Naive thymus-derived CD4-positive, alpha-beta T cell (primary cell): ENCODE measurements at regions of chr15 and their contacts with region 1.

Region 1: DNA sequence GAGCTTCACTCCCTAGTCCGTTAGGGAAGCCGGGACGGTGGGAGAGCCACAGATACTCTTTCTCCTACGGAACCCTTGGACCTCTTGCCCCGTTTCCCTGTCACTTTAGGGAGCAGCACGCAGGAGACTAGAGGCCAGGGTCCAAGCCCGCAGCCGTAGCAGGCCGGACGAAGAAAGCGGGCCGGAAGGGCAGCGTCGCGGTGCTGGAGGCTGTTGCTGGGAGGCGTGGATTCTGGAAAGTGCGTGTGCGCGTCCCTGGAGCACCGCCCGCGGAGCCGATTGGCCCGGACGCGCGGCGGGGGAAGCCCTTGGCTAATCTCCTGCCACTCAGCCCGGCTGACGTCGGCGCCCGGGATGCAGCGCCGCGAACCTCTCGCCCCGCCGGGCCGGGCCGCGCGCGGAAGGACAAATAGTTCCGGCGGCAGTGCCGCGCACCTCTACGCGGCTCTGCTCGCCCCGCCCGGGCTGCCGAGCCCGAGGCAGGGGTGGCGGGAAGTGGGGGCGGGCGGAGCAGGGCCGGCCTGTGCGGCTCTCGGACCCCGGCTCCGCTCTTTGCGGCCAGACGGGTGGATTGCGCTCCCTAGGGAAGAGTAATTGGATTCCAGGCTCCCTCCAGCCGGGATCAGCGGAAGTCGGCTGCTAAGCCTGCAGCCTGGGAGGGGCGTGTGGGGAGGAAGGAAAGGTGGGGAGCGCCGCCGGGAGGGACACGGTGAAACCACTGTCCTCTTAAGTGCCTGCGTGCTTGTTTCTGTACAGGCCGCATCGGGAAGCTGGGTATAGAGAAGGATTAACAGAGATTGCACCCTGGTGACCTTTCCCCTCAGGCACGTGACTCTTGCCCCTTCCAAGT is 31.3 kb upstream of the TCF12 start:
- DNase-seq: peak; percentile 74 to 86 (median 80)
- ATAC-seq: peak; percentile 91
- H3K4me3 ChIP-seq: peak overlapping the region; percentile 80
- H3K4me3 Mint-ChIP-seq: peak overlapping the region; percentile 82 to 96 (median 88)
- H3K27ac ChIP-seq: peak overlapping the region; percentile 86
- H3K27ac Mint-ChIP-seq: peak overlapping the region; percentile 80 to 98 (median 93)
- H3K4me1 ChIP-seq: peaks cover 9 to 12% of the 10 kb centered on the region in 2 donors
- H3K4me1 Mint-ChIP-seq: peaks cover 17 to 35% (median 26%) of the 10 kb centered on the region in 7 donors
- H3K27me3 ChIP-seq: no peaks in the 10 kb centered on the region
- H3K27me3 Mint-ChIP-seq: peaks cover 0 to 8% (median 0%) of the 10 kb centered on the region in 5 donors

Region 2: GRCh38 chr15:56390739-56391267 is 496.4 kb before region 1 on chr15:
- CTCF ChIA-PET with region 1: no interaction called
- POLR2A ChIA-PET with region 1: no interaction called
- intact Hi-C with region 1: no loop called
- DNase-seq: no peak
- ATAC-seq: no peak
- H3K4me3 ChIP-seq: no peak overlapping the region
- H3K4me3 Mint-ChIP-seq: no peak overlapping the region
- H3K27ac ChIP-seq: no peak overlapping the region
- H3K27ac Mint-ChIP-seq: no peak overlapping the region
- H3K4me1 ChIP-seq: no peaks in the 10 kb centered on the region
- H3K4me1 Mint-ChIP-seq: no peaks in the 10 kb centered on the region
- H3K27me3 ChIP-seq: no peaks in the 10 kb centered on the region
- H3K27me3 Mint-ChIP-seq: peaks cover 0 to 15% (median 0%) of the 10 kb centered on the region in 5 donors

Region 3: GRCh38 chr15:56984681-56985481 is 97.7 kb after region 1 on chr15:
- CTCF ChIA-PET with region 1: no interaction called
- POLR2A ChIA-PET with region 1: no interaction called
- intact Hi-C with region 1: loop called in 1 of 2 experiments (anchors 5 kb)
- DNase-seq: no peak
- ATAC-seq: peak; percentile 66
- H3K4me3 ChIP-seq: no peak overlapping the region
- H3K4me3 Mint-ChIP-seq: peak overlapping the region in 3 of 10 donors; percentile 9 to 58 (median 19)
- H3K27ac ChIP-seq: no peak overlapping the region
- H3K27ac Mint-ChIP-seq: peak overlapping the region in 3 of 9 donors; percentile 12 to 49 (median 29)
- H3K4me1 ChIP-seq: peaks cover 3 to 36% of the 10 kb centered on the region in 2 donors
- H3K4me1 Mint-ChIP-seq: peaks cover 32 to 84% (median 65%) of the 10 kb centered on the region in 7 donors
- H3K27me3 ChIP-seq: no peaks in the 10 kb centered on the region
- H3K27me3 Mint-ChIP-seq: no peaks in the 10 kb centered on the region

Region 4: GRCh38 chr15:57377478-57377847 is 490.3 kb after region 1 on chr15:
- CTCF ChIA-PET with region 1: no interaction called
- POLR2A ChIA-PET with region 1: no interaction called
- intact Hi-C with region 1: no loop called
- DNase-seq: no peak
- ATAC-seq: no peak
- H3K4me3 ChIP-seq: no peak overlapping the region
- H3K4me3 Mint-ChIP-seq: peak overlapping the region in 7 of 10 donors; percentile 8 to 68 (median 60)
- H3K27ac ChIP-seq: no peak overlapping the region
- H3K27ac Mint-ChIP-seq: no peak overlapping the region
- H3K4me1 ChIP-seq: no peaks in the 10 kb centered on the region
- H3K4me1 Mint-ChIP-seq: peaks cover 6 to 14% (median 11%) of the 10 kb centered on the region in 7 donors
- H3K27me3 ChIP-seq: peaks cover 0 to 15% of the 10 kb centered on the region in 2 donors
- H3K27me3 Mint-ChIP-seq: peaks cover 45 to 66% (median 60%) of the 10 kb centered on the region in 5 donors